ENCODE measurements at regions of chr17 and their contacts with region 1.

Region 1: GRCh38 chr17:17239832-17240231 is 2.9 kb upstream of the FLCN start:
- DNase-seq: no peak
- ATAC-seq: no peak
- H3K4me3 ChIP-seq: no peak overlapping the region
- H3K27ac ChIP-seq: no peak overlapping the region
- H3K4me1 ChIP-seq: peaks cover 19% of the 10 kb centered on the region
- H3K27me3 ChIP-seq: no peaks in the 10 kb centered on the region
- CTCF ChIP-seq: no peak

Region 2: DNA sequence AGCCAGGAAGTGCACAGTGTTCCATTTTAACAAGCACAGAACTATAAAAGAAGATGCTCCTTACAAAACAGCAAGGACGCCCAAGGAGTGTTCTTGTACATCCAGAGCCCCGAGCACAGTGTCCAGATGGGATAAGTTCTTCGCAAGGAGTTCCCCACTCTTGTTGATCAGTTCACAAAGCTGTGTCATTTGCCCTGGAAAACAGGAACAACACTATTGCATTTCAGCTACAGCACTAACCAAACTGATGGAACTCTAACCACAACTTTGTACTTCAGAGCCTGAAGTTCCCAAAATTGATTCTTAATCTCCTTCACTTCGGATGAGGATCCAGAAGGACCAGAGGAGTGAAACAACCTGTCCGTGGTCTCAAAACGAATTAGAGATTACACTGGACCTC is 36.1 kb after region 1 on chr17:
- intact Hi-C with region 1: loop called in 1 of 2 experiments (anchors 5 kb)
- DNase-seq: no peak
- ATAC-seq: no peak
- H3K4me3 ChIP-seq: no peak overlapping the region
- H3K27ac ChIP-seq: peak overlapping the region; percentile 48
- H3K4me1 ChIP-seq: peaks cover 52% of the 10 kb centered on the region
- H3K27me3 ChIP-seq: no peaks in the 10 kb centered on the region
- CTCF ChIP-seq: no peak

Measured in psoas muscle (tissue), 8 donors.